ENCODE measurements at regions of chr7 and their contacts with region 1.

Region 1: GRCh38 chr7:37510043-37510634 is 61.5 kb upstream of the ELMO1 start:
- DNase-seq: peak; percentile 46
- ATAC-seq: no peak
- H3K4me3 ChIP-seq: no peak overlapping the region
- H3K4me3 Mint-ChIP-seq: no peak overlapping the region
- H3K27ac ChIP-seq: no peak overlapping the region
- H3K27ac Mint-ChIP-seq: no peak overlapping the region
- H3K4me1 ChIP-seq: no peaks in the 10 kb centered on the region
- H3K4me1 Mint-ChIP-seq: no peaks in the 10 kb centered on the region
- H3K27me3 ChIP-seq: peaks cover 0 to 11% (median 2%) of the 10 kb centered on the region in 4 experiments
- H3K27me3 Mint-ChIP-seq: peaks cover 33% of the 10 kb centered on the region
- CTCF ChIP-seq: peak; percentile 88

Region 2: GRCh38 chr7:36625247-36625646 is 884.9 kb before region 1 on chr7:
- CTCF ChIA-PET with region 1: no interaction called
- POLR2A ChIA-PET with region 1: no interaction called
- intact Hi-C with region 1: no loop called
- DNase-seq: no peak
- ATAC-seq: no peak
- H3K4me3 ChIP-seq: no peak overlapping the region
- H3K4me3 Mint-ChIP-seq: no peak overlapping the region
- H3K27ac ChIP-seq: no peak overlapping the region
- H3K27ac Mint-ChIP-seq: no peak overlapping the region
- H3K4me1 ChIP-seq: peaks cover 35 to 39% of the 10 kb centered on the region in 2 donors
- H3K4me1 Mint-ChIP-seq: peaks cover 42% of the 10 kb centered on the region
- H3K27me3 ChIP-seq: no peaks in the 10 kb centered on the region
- H3K27me3 Mint-ChIP-seq: no peaks in the 10 kb centered on the region
- CTCF ChIP-seq: no peak

Region 3: GRCh38 chr7:37027557-37028341 is 482.4 kb before region 1 on chr7:
- CTCF ChIA-PET with region 1: no interaction called
- POLR2A ChIA-PET with region 1: no interaction called
- intact Hi-C with region 1: no loop called
- DNase-seq: no peak
- ATAC-seq: no peak
- H3K4me3 ChIP-seq: no peak overlapping the region
- H3K4me3 Mint-ChIP-seq: no peak overlapping the region
- H3K27ac ChIP-seq: no peak overlapping the region
- H3K27ac Mint-ChIP-seq: no peak overlapping the region
- H3K4me1 ChIP-seq: no peaks in the 10 kb centered on the region
- H3K4me1 Mint-ChIP-seq: no peaks in the 10 kb centered on the region
- H3K27me3 ChIP-seq: no peaks in the 10 kb centered on the region
- H3K27me3 Mint-ChIP-seq: no peaks in the 10 kb centered on the region
- CTCF ChIP-seq: no peak

Region 4: DNA sequence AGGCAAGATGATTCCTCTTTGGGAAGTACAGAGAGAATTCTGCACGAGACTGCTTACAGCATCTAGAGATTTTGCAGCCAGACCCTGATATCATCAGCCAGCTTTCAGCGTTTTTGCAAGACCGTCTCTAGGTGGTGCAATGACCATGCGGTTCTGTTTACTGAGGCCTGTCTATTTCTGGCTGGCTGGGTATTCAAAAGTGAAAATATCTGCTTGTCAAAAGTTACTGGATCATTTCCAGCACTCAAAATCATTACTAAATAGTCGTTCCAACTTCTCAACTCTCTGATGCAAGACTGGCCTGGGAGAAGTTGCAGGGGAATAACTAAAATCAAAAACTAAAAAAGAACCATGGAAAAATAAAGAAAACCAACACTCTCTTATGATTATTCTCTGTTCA is 301.6 kb before region 1 on chr7:
- CTCF ChIA-PET with region 1: interaction called, 24 read pairs
- POLR2A ChIA-PET with region 1: no interaction called
- intact Hi-C with region 1: loop called (anchors 1 kb)
- DNase-seq: peak; percentile 53
- ATAC-seq: peak; percentile 81
- H3K4me3 ChIP-seq: no peak overlapping the region
- H3K4me3 Mint-ChIP-seq: no peak overlapping the region
- H3K27ac ChIP-seq: peak overlapping the region in 1 of 2 donors; percentile 31
- H3K27ac Mint-ChIP-seq: peak overlapping the region; percentile 32
- H3K4me1 ChIP-seq: peaks cover 7 to 11% of the 10 kb centered on the region in 2 donors
- H3K4me1 Mint-ChIP-seq: peaks cover 15% of the 10 kb centered on the region
- H3K27me3 ChIP-seq: no peaks in the 10 kb centered on the region
- H3K27me3 Mint-ChIP-seq: no peaks in the 10 kb centered on the region
- CTCF ChIP-seq: peak; percentile 63

Region 5: GRCh38 chr7:37234928-37235327 is 275.2 kb before region 1 on chr7:
- CTCF ChIA-PET with region 1: interaction called, 50 read pairs
- POLR2A ChIA-PET with region 1: no interaction called
- intact Hi-C with region 1: loop called (anchors 1 kb)
- DNase-seq: peak; percentile 58
- ATAC-seq: peak; percentile 24
- H3K4me3 ChIP-seq: no peak overlapping the region
- H3K4me3 Mint-ChIP-seq: no peak overlapping the region
- H3K27ac ChIP-seq: no peak overlapping the region
- H3K27ac Mint-ChIP-seq: no peak overlapping the region
- H3K4me1 ChIP-seq: no peaks in the 10 kb centered on the region
- H3K4me1 Mint-ChIP-seq: peaks cover 2% of the 10 kb centered on the region
- H3K27me3 ChIP-seq: no peaks in the 10 kb centered on the region
- H3K27me3 Mint-ChIP-seq: no peaks in the 10 kb centered on the region
- CTCF ChIP-seq: peak; percentile 81